Gastrocnemius medialis (tissue), 4 donors: ENCODE measurements at regions of chr2 and their contacts with region 1.

Region 1: DNA sequence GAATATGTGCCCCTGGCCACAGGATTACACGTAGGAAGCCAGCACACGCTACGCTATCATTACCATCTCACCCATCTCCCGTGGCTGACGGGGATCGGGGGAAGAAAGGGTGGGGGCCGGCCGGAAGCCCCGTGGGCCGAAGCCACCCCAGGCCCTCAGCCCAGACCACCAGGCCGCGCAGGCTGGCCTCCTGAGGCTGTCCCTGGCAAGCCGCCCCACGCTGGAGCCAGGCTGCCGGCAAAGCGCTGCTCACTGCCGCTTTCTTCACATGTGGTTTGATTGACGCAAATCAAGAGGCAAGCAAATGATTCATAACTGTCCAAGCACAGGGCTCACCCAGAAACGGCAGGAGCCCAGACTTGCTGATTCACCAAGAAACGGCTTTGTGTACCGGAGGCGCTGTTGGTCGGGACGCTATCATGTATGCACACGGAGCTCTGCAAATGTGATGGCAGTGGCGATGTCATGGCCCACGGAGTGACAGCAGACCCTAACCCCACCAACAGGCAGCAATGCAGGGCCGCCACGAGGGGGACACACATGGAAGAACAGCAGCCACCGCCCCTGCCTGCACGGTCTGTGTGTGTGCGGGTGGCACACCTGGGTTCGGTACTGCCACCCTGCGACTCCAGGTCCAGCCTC is 125.7 kb downstream of the HDAC4 start:
- DNase-seq: peak; percentile 92 to 96
- ATAC-seq: peak; percentile 68 to 75
- H3K4me3 ChIP-seq: peak overlapping the region; percentile 22 to 46 (median 40)
- H3K27ac ChIP-seq: peak overlapping the region; percentile 94 to 99 (median 98)
- H3K4me1 ChIP-seq: peaks cover 97 to 98% of the 10 kb centered on the region in 2 donors
- H3K27me3 ChIP-seq: no peaks in the 10 kb centered on the region
- CTCF ChIP-seq: peak in 3 of 5 experiments; percentile 8 to 58 (median 25)
- POLR2A ChIP-seq: peak; percentile 58 to 76

Region 2: DNA sequence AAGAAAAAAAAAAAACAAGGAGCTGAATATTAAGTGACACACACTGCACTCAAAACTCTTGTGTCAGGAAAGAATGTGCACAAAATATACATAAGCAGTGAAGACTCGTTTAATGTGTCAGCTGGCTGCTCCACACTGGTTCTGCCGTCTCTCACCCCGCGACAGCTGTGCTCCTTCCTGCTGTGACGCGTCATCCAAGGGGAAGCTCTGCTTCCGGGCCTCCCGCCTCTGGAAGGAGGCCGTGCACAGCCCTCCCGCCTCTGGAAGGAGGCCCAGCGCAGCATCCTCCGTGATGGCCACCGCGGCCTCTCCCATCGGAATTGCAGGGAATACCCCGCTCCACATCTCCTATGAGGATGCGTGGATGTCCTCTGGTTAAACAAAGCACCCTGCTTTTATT is 25.4 kb before region 1 on chr2:
- in situ Hi-C with region 1: no loop called
- intact Hi-C with region 1: loop called (anchors 1 kb)
- DNase-seq: peak in 1 of 2 donors; percentile 52
- ATAC-seq: no peak
- H3K4me3 ChIP-seq: no peak overlapping the region
- H3K27ac ChIP-seq: peak overlapping the region; percentile 94 to 99 (median 98)
- H3K4me1 ChIP-seq: peaks cover 94 to 95% of the 10 kb centered on the region in 2 donors
- H3K27me3 ChIP-seq: no peaks in the 10 kb centered on the region
- CTCF ChIP-seq: no peak
- POLR2A ChIP-seq: peak; percentile 13 to 15

Region 3: DNA sequence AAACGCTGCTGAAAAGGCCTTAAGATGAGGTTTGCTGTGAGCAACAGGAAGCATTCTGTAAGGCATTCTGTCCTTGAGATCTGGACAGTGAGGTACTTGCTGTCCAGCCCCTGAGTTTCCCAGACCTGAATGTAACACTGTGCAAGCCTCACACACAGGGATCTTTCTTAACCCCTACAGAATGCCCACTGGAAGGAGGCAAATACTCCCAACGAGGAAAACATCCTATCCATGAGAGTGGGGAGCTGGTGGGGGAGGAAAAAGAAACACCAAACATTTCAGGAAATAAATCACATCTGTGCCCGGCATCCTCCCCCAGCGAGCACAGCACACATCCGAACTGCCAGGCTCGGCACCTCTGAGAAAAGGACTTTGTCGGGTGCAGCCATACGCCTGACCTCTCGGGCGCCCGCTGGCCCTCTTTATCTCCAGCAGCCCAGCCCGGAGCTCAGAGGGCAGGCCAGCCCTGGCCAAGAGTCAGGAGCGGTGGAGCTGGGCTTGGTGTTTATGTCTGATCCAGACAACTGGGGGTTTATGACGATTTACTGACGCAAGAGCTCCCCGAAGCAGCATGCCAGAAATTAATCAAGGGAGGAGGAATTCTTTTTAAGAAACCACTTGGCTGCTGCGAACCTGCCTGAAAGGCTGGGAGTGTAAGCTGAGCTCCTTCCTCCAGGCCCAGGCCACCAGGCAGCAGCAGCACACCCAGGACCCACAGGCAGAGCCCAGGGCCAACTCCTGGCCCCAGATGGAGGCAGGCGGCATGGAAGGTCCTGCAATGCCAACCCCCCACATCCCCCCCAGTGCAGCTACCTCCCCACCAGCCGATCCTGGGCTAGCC is 53.4 kb after region 1 on chr2:
- in situ Hi-C with region 1: no loop called
- intact Hi-C with region 1: loop called (anchors 2 kb)
- DNase-seq: peak; percentile 81 to 93
- ATAC-seq: peak; percentile 49 to 55
- H3K4me3 ChIP-seq: peak overlapping the region in 3 of 4 donors; percentile 11 to 36 (median 26)
- H3K27ac ChIP-seq: peak overlapping the region; percentile 96 to 99 (median 98)
- H3K4me1 ChIP-seq: peaks cover 45 to 58% of the 10 kb centered on the region in 2 donors
- H3K27me3 ChIP-seq: no peaks in the 10 kb centered on the region
- CTCF ChIP-seq: peak in 1 of 5 experiments; percentile 11
- POLR2A ChIP-seq: peak; percentile 91 to 94